ENCODE measurements at regions of chr12 and their contacts with region 1.

Region 1: GRCh38 chr12:10453144-10453543 is at the start of gene KLRC1:
- DNase-seq: peak in 1 of 2 donors; percentile 26
- ATAC-seq: peak; percentile 59 to 75 (median 75)
- H3K4me3 ChIP-seq: peak within 1 kb of the TSS; percentile 55
- H3K4me3 Mint-ChIP-seq: peak within 1 kb of the TSS; percentile 67
- H3K27ac ChIP-seq: peak within 1 kb of the TSS; percentile 39
- H3K27ac Mint-ChIP-seq: peak within 1 kb of the TSS; percentile 52 to 90
- H3K4me1 ChIP-seq: peaks cover 18% of the 10 kb centered on the region
- H3K4me1 Mint-ChIP-seq: peaks cover 16 to 45% of the 10 kb centered on the region in 2 donors
- H3K27me3 ChIP-seq: no peaks in the 10 kb centered on the region
- H3K27me3 Mint-ChIP-seq: no peaks in the 10 kb centered on the region
- CTCF ChIP-seq: no peak
- total RNA-seq, gene KLRC1: 30.0 to 180 (median 83.1) TPM

Region 2: DNA sequence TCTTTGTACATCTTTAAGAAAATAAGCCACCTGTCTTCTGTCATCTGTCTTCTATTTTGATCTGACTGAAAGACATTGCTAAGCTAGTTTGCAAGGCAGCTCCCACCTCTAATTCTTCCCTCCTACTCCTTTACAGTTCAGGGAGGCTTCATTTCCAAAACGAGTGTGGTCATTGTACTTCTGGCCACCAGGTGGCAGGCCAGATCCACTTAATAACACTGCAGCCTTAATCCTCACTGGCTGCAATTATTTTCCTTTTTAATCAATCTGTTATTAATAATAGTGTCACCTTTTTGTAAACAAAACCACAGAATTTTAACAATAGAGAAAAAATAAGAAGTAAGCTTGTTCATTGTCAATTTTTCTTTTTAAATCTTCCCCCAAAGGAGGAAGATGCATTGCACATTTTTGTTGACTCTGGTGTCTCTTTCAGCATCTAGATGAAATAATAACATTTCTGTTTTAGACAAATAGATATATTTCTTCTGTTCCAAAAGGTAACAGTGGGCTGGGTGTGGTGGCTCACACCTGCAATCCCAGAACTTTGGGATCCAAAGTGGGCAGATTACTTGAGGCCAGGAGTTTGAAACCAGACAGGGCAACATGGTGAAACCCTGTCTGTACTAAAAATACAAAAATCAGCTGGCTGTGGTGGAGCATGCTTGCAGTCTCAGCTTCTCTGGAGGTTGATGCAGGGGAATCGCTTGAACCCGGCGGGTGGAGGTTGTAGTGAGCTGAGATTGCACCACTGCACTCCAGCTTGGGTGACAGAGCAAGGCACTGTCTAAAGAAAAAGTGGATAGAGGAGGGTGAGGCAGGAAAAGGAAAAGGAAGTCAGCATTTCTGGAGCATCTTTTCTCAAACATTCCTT is 217.1 kb before region 1 on chr12:
- intact Hi-C with region 1: loop called (anchors 5 kb)
- DNase-seq: peak; percentile 53 to 83
- ATAC-seq: peak; percentile 76 to 84 (median 77)
- H3K4me3 ChIP-seq: no peak overlapping the region
- H3K4me3 Mint-ChIP-seq: peak overlapping the region; percentile 56
- H3K27ac ChIP-seq: peak overlapping the region; percentile 51
- H3K27ac Mint-ChIP-seq: peak overlapping the region; percentile 85 to 89
- H3K4me1 ChIP-seq: peaks cover 26% of the 10 kb centered on the region
- H3K4me1 Mint-ChIP-seq: peaks cover 57% of the 10 kb centered on the region in 2 donors
- H3K27me3 ChIP-seq: no peaks in the 10 kb centered on the region
- H3K27me3 Mint-ChIP-seq: no peaks in the 10 kb centered on the region
- CTCF ChIP-seq: peak; percentile 96

Region 3: DNA sequence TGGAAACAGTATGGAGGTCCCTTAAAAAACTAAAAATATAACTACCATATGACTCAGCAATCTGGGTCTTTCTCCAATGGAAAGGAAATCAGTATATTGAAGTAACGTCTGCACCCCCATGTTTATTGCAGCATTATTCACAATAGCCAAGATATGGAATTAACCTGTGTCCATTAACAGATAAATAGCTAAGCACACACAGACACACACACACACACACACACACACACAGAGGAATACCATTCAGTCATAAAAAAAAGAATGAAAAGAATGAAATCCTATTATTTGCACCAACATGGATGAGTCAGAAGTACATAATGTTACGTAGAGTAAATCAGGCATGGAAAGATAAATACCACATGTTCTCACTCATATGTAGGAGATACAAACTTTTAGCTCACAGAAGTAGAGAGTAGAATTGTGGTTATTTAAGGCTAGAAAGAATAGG is 68.0 kb before region 1 on chr12:
- intact Hi-C with region 1: loop called (anchors 5 kb)
- DNase-seq: no peak
- ATAC-seq: peak; percentile 53 to 60 (median 60)
- H3K4me3 ChIP-seq: peak overlapping the region; percentile 92
- H3K4me3 Mint-ChIP-seq: peak overlapping the region; percentile 86
- H3K27ac ChIP-seq: peak overlapping the region; percentile 86
- H3K27ac Mint-ChIP-seq: peak overlapping the region; percentile 89 to 91
- H3K4me1 ChIP-seq: peaks cover 16% of the 10 kb centered on the region
- H3K4me1 Mint-ChIP-seq: peaks cover 66 to 77% of the 10 kb centered on the region in 2 donors
- H3K27me3 ChIP-seq: no peaks in the 10 kb centered on the region
- H3K27me3 Mint-ChIP-seq: no peaks in the 10 kb centered on the region
- CTCF ChIP-seq: no peak

Region 4: DNA sequence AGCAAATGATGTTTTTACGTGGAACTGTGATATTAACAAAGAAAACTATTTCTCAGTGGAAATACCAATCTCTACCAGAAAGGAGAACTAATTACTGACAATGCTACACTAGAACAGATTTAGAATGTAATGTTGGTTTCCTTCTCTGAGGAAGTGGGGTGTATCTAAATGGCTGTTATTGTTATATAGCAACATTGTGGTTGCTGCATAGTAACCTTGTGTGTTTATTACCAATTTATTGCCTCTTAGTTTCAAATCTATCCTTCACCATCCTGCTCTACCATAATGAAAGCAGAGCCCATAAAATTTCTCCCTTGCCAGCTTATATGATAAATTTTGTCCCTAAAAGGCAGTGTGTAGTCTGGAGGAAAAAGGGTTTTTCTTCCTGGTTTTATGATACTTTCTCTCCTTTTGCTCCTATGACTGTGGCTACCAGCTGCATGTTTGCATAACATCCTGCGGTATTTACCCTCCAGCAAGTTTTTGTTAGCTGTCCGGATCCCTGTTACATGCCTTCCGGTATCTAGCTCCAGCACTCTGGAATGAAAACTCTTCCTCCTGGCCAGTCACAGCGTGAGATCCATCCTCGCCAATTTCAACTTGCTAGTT is 57.6 kb before region 1 on chr12:
- intact Hi-C with region 1: loop called (anchors 5 kb)
- DNase-seq: peak in 1 of 2 donors; percentile 75
- ATAC-seq: peak; percentile 52 to 82 (median 75)
- H3K4me3 ChIP-seq: peak overlapping the region; percentile 5
- H3K4me3 Mint-ChIP-seq: peak overlapping the region; percentile 87
- H3K27ac ChIP-seq: peak overlapping the region; percentile 92
- H3K27ac Mint-ChIP-seq: peak overlapping the region; percentile 97 to 98
- H3K4me1 ChIP-seq: peaks cover 42% of the 10 kb centered on the region
- H3K4me1 Mint-ChIP-seq: peaks cover 63 to 68% of the 10 kb centered on the region in 2 donors
- H3K27me3 ChIP-seq: no peaks in the 10 kb centered on the region
- H3K27me3 Mint-ChIP-seq: no peaks in the 10 kb centered on the region
- CTCF ChIP-seq: no peak